Naive thymus-derived CD8-positive, alpha-beta T cell (primary cell): ENCODE measurements at regions of chr5 and their contacts with region 1.

Region 1: DNA sequence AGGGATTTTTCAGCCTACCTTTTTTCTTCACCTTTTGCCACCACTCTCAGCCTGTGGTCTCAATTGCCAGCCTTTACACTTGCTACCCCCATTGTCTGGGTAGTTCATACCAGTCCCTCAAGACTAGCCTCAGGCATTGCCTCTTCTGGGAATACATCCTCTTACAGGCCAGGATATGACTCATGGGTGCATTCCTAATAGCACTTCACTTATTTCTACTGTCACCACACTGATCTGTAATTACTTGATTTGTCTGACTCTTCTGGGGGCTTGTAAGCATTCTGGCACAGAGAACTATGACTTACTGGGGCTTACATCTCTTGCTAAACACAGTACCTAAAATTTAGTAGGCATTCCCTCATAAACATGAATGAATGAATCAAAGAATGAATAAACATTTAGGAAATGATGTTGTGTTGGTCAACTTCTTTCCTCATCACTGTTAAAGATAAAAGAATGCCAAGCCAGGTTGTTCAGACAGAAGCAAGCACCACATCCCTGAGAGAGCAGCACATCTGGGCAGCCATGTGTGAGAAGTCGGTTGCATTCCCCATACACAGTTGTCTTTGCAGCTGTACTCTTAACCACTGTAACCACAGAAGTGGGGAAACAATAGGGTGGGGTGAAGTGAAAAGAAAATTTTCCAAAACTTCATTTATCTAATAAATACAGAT is 27.6 kb downstream of the IL7R start:
- DNase-seq: no peak
- ATAC-seq: peak; percentile 43 to 54
- H3K4me3 Mint-ChIP-seq: peak overlapping the region in 7 of 10 donors; percentile 5 to 51 (median 21)
- H3K27ac Mint-ChIP-seq: peak overlapping the region; percentile 9 to 85 (median 58)
- H3K4me1 Mint-ChIP-seq: peaks cover 30 to 55% (median 53%) of the 10 kb centered on the region in 4 donors
- H3K27me3 Mint-ChIP-seq: no peaks in the 10 kb centered on the region

Region 2: GRCh38 chr5:35754481-35754880 is 129.8 kb before region 1 on chr5:
- POLR2A ChIA-PET with region 1: no interaction called
- DNase-seq: no peak
- ATAC-seq: no peak
- H3K4me3 Mint-ChIP-seq: no peak overlapping the region
- H3K27ac Mint-ChIP-seq: no peak overlapping the region
- H3K4me1 Mint-ChIP-seq: peaks cover 9 to 24% (median 17%) of the 10 kb centered on the region in 4 donors
- H3K27me3 Mint-ChIP-seq: no peaks in the 10 kb centered on the region

Region 3: GRCh38 chr5:35857606-35858205 is 26.5 kb before region 1 on chr5:
- POLR2A ChIA-PET with region 1: interaction called, 37 read pairs
- DNase-seq: peak in 3 of 10 donors; percentile 41 to 45 (median 41)
- ATAC-seq: no peak
- H3K4me3 Mint-ChIP-seq: peak overlapping the region; percentile 83 to 97 (median 94)
- H3K27ac Mint-ChIP-seq: peak overlapping the region; percentile 95 to 100 (median 100)
- H3K4me1 Mint-ChIP-seq: peaks cover 42 to 63% (median 59%) of the 10 kb centered on the region in 4 donors
- H3K27me3 Mint-ChIP-seq: no peaks in the 10 kb centered on the region

Region 4: DNA sequence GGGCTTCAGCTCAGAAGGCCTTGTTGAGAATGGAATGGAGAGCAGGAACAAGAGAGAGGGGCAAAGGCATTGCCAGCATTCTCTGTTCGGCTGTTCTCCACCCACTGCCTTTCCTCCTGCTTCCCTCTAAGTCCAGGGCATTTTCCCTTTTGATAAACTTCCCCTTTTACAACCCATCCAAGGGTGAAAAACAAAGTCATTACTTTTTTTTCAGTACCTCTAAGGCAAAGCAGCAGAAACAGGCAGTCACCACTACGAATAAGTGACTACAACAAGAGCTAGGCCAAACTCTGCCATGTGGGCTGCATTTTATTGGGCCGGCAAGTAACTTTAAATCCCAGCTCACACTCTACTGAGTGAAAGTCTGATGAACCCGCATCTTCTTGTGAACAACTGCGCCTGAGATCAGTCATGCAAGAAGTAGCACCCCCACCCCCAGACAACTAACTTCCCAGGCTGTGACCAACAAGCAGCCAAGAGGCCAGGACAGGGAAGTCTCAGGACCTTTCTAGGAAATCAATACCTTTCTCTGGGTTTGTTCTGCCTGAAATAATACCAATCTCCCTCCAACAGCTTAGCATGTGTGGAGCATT is 14.5 kb before region 1 on chr5:
- POLR2A ChIA-PET with region 1: interaction called, 33 read pairs
- DNase-seq: no peak
- ATAC-seq: peak in 1 of 2 donors; percentile 10
- H3K4me3 Mint-ChIP-seq: peak overlapping the region in 8 of 10 donors; percentile 33 to 78 (median 65)
- H3K27ac Mint-ChIP-seq: peak overlapping the region; percentile 77 to 92 (median 88)
- H3K4me1 Mint-ChIP-seq: peaks cover 41 to 91% (median 83%) of the 10 kb centered on the region in 4 donors
- H3K27me3 Mint-ChIP-seq: no peaks in the 10 kb centered on the region